ENCODE measurements at regions of chr11 and their contacts with region 1.

Region 1: DNA sequence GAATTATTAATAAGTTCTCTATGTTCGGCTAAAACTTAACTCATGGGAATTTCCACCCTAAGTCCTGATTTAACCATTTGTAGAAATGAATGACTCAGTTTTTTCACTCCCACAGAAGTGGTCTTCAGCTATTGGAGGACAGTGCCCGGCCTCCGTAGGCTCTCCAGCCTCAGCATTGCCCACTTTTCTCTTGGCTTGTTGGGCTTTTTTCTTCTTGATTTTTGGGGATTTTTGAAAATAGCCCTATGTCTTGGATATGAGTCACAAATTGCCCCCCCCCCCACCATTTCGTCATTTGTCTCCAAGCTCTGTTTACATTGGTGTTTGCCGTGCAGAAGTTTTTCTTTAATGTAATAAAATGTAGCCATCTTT is 66.7 kb downstream of the PACS1 start:
- DNase-seq: no peak
- H3K4me3 ChIP-seq: no peak overlapping the region
- H3K27ac ChIP-seq: no peak overlapping the region
- H3K4me1 ChIP-seq: no peaks in the 10 kb centered on the region
- H3K27me3 ChIP-seq: no peaks in the 10 kb centered on the region
- CTCF ChIP-seq: no peak
- EP300 ChIP-seq: no peak
- POLR2A ChIP-seq: no peak
- RAD21 ChIP-seq: no peak

Region 2: GRCh38 chr11:66069715-66070603 is 66.8 kb before region 1 on chr11 and contains the start of gene PACS1:
- CTCF ChIA-PET with region 1: interaction called, 73 read pairs
- POLR2A ChIA-PET with region 1: interaction called, 23 read pairs
- DNase-seq: peak; percentile 34 to 85
- H3K4me3 ChIP-seq: peak within 1 kb of the TSS; percentile 43 to 90 (median 63)
- H3K27ac ChIP-seq: peak within 1 kb of the TSS; percentile 46
- H3K4me1 ChIP-seq: peaks cover 5 to 13% (median 8%) of the 10 kb centered on the region in 4 experiments; a peak in 6 of 7 replicates
- H3K27me3 ChIP-seq: no peaks in the 10 kb centered on the region
- CTCF ChIP-seq: no peak
- EP300 ChIP-seq: no peak
- POLR2A ChIP-seq: peak in 1 of 2 experiments; percentile 88; a peak in 1 of 3 replicates
- RAD21 ChIP-seq: no peak
- total RNA-seq, gene PACS1: 34.4 and 36.0 TPM in 2 replicates

Region 3: DNA sequence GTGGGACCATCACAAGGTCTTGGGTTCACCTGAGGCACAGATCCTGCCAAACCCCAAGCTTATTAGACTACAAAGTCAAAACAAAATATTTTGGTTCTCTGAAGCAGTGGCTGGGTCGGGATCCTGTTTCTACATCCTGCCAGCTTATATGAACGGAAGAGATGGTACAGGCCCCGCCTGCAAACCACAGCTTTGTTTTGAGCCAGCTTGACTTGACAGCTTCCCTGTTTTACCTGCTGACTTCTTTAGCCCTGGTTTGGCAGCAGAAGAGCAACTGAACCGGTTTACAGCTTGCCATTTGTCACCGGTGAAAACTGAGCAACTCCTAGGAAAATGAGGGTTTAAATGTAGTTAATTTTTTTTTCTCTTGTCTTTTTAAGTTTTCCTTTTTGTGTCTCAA is 55.2 kb before region 1 on chr11:
- CTCF ChIA-PET with region 1: interaction called, 17 read pairs
- POLR2A ChIA-PET with region 1: no interaction called
- DNase-seq: no peak
- H3K4me3 ChIP-seq: no peak overlapping the region
- H3K27ac ChIP-seq: no peak overlapping the region
- H3K4me1 ChIP-seq: no peaks in the 10 kb centered on the region
- H3K27me3 ChIP-seq: no peaks in the 10 kb centered on the region
- CTCF ChIP-seq: no peak
- EP300 ChIP-seq: no peak
- POLR2A ChIP-seq: no peak
- RAD21 ChIP-seq: no peak

Region 4: DNA sequence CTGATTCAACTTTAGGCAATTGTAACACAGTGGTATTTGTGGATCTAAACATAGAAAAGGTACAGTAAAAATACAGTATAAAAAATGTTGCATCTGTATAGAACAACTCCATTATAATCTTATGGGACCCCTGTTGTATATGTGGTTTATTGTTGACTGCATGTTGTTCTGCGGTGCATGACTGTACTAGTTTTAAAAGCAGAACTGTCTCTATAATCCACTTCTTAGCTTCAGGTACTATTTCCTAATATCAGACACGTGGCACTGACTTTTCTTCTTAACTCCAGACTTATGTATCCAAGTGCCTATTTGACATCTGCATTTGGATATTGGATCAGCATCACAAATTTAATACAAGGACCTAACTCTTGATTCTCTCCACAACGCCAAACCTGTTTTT is 25.6 kb before region 1 on chr11:
- CTCF ChIA-PET with region 1: interaction called, 11 read pairs
- POLR2A ChIA-PET with region 1: no interaction called
- DNase-seq: no peak
- H3K4me3 ChIP-seq: no peak overlapping the region
- H3K27ac ChIP-seq: no peak overlapping the region
- H3K4me1 ChIP-seq: peaks cover 7 to 21% (median 16%) of the 10 kb centered on the region in 4 experiments
- H3K27me3 ChIP-seq: no peaks in the 10 kb centered on the region
- CTCF ChIP-seq: no peak
- EP300 ChIP-seq: no peak
- POLR2A ChIP-seq: no peak
- RAD21 ChIP-seq: no peak

Region 5: DNA sequence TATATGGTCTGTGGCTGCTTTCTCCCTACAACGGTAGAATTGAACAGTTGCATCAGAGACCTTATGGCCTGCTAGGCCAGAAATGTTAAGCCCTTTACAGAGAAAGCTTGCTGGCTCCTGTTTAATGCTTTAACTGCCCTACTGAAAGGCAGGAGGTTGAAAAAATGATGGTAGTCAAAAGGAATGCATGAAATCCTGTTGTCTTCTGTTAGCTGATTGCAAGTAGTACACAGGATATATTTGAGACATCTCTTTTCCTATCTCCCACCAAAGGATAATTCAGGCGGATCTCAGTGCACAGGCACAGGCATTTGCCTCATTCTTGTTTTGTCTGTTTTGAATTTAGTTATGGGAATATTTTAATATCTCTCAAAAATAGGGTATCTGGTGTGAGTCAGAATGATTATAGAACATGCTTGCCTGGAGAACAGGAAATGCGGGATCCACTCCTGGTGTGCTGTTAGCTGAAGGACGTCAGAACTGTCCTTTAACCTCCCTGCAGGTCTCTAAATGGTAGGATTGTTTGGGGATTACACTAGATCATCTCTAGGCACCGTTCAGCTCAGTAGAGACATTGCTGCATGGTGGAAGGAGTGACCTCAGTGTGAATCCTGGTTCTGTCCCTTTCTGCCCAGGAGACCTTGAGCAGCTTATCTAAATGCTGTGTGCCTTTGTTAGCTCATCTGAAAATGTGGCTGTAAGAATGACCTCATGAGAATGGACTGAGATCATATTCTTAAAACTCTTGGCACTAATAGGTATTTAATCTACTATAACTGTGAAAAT is 17.2 kb before region 1 on chr11:
- CTCF ChIA-PET with region 1: interaction called, 28 read pairs
- POLR2A ChIA-PET with region 1: interaction called, 5 read pairs
- DNase-seq: no peak
- H3K4me3 ChIP-seq: no peak overlapping the region
- H3K27ac ChIP-seq: no peak overlapping the region
- H3K4me1 ChIP-seq: peaks cover 0 to 10% (median 5%) of the 10 kb centered on the region in 4 experiments; a peak in 5 of 7 replicates
- H3K27me3 ChIP-seq: no peaks in the 10 kb centered on the region; a peak in 1 of 7 replicates
- CTCF ChIP-seq: no peak
- EP300 ChIP-seq: no peak
- POLR2A ChIP-seq: no peak
- RAD21 ChIP-seq: no peak

Region 6: GRCh38 chr11:66150140-66150539 is 13.4 kb after region 1 on chr11:
- CTCF ChIA-PET with region 1: interaction called, 15 read pairs
- POLR2A ChIA-PET with region 1: interaction called, 3 read pairs
- DNase-seq: no peak
- H3K4me3 ChIP-seq: no peak overlapping the region
- H3K27ac ChIP-seq: no peak overlapping the region
- H3K4me1 ChIP-seq: no peaks in the 10 kb centered on the region
- H3K27me3 ChIP-seq: no peaks in the 10 kb centered on the region
- CTCF ChIP-seq: no peak
- EP300 ChIP-seq: no peak
- POLR2A ChIP-seq: no peak
- RAD21 ChIP-seq: no peak

Region 7: GRCh38 chr11:66159324-66159984 is 22.7 kb after region 1 on chr11:
- CTCF ChIA-PET with region 1: interaction called, 11 read pairs
- POLR2A ChIA-PET with region 1: interaction called, 3 read pairs
- DNase-seq: no peak
- H3K4me3 ChIP-seq: no peak overlapping the region
- H3K27ac ChIP-seq: no peak overlapping the region
- H3K4me1 ChIP-seq: no peaks in the 10 kb centered on the region
- H3K27me3 ChIP-seq: no peaks in the 10 kb centered on the region
- CTCF ChIP-seq: no peak
- EP300 ChIP-seq: no peak
- POLR2A ChIP-seq: no peak
- RAD21 ChIP-seq: no peak